Activated CD4-positive, alpha-beta memory T cell treated with anti-CD3 and anti-CD28 coated beads for 36 hours (primary cell): ENCODE measurements at regions of chr22 and their contacts with region 1.

Region 1: DNA sequence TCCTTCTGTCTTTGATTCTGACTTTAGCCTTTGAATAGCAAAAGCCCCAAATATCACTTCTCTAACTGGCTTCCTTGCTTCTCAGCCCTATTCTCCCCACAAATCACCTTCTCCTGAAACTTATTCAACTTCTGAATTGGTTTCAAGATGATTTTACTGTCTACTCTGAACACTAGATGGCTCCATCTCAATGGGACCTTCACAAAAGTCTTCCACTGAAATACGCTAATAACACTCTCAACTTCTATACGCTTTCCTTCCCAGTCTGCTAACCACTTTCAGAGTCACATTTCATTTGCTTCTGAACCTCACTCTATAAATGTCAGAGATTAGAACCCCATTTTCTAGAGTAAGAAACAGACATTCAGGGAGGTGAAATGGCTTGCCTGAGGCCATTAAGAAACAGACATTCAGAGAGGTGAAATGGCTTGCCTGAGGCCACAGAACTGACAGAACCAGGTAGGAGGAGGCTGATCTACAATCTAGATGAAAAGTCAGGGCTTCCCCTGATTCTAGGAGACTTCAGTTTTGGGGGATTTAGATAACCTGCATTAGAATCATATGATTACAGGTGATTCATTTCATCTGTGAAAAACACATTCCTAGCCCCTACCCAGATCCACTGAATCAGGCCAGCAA is 20.6 kb downstream of the MORC2 start:
- DNase-seq: no peak
- H3K4me3 Mint-ChIP-seq: no peak overlapping the region
- H3K27ac Mint-ChIP-seq: no peak overlapping the region
- H3K4me1 Mint-ChIP-seq: peaks cover 33% of the 10 kb centered on the region
- H3K27me3 Mint-ChIP-seq: no peaks in the 10 kb centered on the region

Region 2: GRCh38 chr22:30841264-30841663 is 106.7 kb before region 1 on chr22:
- CTCF ChIA-PET with region 1: no interaction called
- POLR2A ChIA-PET with region 1: no interaction called
- intact Hi-C with region 1: no loop called
- DNase-seq: no peak
- H3K4me3 Mint-ChIP-seq: no peak overlapping the region
- H3K27ac Mint-ChIP-seq: peak overlapping the region; percentile 30
- H3K4me1 Mint-ChIP-seq: no peaks in the 10 kb centered on the region
- H3K27me3 Mint-ChIP-seq: peaks cover 3% of the 10 kb centered on the region

Region 3: GRCh38 chr22:30998329-30998728 is 50.4 kb after region 1 on chr22:
- CTCF ChIA-PET with region 1: no interaction called
- POLR2A ChIA-PET with region 1: no interaction called
- intact Hi-C with region 1: no loop called
- DNase-seq: no peak
- H3K4me3 Mint-ChIP-seq: no peak overlapping the region
- H3K27ac Mint-ChIP-seq: no peak overlapping the region
- H3K4me1 Mint-ChIP-seq: no peaks in the 10 kb centered on the region
- H3K27me3 Mint-ChIP-seq: peaks cover 5% of the 10 kb centered on the region

Region 4: GRCh38 chr22:31020334-31020733 is 72.4 kb after region 1 on chr22:
- CTCF ChIA-PET with region 1: no interaction called
- POLR2A ChIA-PET with region 1: no interaction called
- intact Hi-C with region 1: no loop called
- DNase-seq: no peak
- H3K4me3 Mint-ChIP-seq: no peak overlapping the region
- H3K27ac Mint-ChIP-seq: no peak overlapping the region
- H3K4me1 Mint-ChIP-seq: no peaks in the 10 kb centered on the region
- H3K27me3 Mint-ChIP-seq: peaks cover 1% of the 10 kb centered on the region

Region 5: DNA sequence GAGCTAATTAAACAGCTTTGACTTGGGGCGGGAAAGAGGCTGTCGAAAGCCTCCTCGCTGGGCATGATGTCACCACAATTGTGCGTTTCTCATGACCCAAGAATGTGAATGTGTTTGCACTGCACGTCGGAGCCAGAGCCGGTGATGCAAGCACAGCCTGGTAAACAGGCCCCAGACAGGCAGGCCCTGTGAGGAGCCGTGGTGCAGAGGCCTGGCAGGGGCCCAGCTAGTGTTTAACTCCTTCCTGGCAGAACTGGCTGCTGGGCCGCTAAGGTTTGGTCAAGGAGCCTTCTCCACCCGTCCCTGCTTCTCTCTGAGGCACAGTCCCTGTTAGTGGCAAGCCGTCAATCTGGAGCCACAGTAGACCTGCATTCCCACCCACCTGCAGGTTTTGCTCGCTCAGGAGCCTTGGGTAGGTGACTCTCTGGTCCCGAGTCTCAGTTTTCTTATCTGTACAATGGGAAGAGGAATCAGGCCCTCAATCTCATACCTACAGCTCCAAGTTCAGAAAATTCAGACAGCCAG is 107.8 kb after region 1 on chr22:
- CTCF ChIA-PET with region 1: no interaction called
- POLR2A ChIA-PET with region 1: no interaction called
- intact Hi-C with region 1: no loop called
- DNase-seq: no peak
- H3K4me3 Mint-ChIP-seq: no peak overlapping the region
- H3K27ac Mint-ChIP-seq: no peak overlapping the region
- H3K4me1 Mint-ChIP-seq: no peaks in the 10 kb centered on the region
- H3K27me3 Mint-ChIP-seq: no peaks in the 10 kb centered on the region

Region 6: DNA sequence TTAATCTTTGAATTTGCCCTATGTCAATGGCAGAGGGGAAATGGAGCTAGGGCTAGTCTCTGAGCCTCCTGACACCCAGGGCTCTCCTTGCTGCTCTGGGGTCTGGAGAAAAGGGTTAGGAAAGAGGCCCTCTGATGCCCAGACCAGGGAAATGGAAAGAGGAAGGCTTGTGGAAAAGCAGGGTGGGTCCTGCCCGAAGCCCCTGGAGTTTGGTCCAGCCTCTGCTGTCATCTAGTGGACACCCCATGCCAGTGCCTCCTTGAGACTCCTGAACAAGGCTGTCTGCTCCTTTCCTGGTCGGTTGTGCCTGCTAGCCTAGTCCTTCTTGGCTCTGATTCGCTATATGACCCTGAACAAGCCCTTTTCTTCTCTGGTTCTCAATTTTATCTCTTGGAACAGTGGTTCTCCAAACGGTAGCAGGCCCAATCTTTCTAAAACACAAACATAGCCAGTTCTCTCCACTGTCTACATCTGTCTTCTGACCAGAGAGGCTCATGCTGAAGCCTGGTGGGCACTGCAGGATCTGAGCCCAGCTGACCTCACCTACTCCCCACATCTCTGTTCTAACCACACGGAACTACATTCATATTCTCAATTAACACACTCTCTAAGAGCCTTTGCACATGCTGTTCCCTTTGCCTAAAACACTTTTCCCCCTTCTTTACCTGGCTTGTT is 201.2 kb after region 1 on chr22:
- CTCF ChIA-PET with region 1: interaction called, 4 read pairs
- POLR2A ChIA-PET with region 1: no interaction called
- intact Hi-C with region 1: loop called (anchors 10 kb)
- DNase-seq: peak; percentile 53
- H3K4me3 Mint-ChIP-seq: no peak overlapping the region
- H3K27ac Mint-ChIP-seq: no peak overlapping the region
- H3K4me1 Mint-ChIP-seq: no peaks in the 10 kb centered on the region
- H3K27me3 Mint-ChIP-seq: peaks cover 2% of the 10 kb centered on the region

Region 7: DNA sequence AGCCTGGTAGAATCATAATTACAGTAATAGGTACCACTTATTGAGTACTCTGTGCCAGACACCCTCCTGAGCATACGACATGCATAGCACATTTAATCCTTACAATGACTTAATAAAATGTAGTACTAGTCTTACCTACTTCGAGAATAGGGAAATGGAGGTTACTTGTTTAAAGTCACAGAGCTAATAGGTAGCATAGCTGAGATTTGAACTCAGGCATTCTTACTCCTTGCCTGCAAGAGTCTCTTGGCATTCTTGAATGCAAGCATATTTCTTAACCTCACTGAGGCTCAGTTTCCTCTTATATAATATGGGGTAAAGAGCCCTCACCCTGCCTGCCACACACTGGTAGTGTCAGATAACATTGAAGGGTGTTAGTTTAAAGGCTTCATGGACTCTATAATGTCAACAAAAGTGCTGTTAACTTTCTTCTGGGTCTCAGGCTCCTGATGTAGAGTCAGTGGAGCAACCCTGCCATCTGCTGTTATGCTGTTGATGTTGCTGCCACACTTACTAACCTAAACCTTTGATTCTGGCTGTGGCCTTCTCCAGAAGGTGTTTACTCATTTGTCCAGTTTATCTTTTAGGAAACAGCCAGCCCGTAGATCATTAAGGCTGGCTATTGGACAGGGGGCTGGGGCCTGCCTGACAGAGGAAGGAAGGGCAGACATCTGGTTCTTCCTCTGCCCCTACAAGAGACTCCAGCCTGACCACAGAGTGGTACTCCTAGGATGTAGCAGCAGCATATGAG is 283.1 kb after region 1 on chr22:
- CTCF ChIA-PET with region 1: interaction called, 4 read pairs
- POLR2A ChIA-PET with region 1: no interaction called
- intact Hi-C with region 1: loop called (anchors 10 kb)
- DNase-seq: peak; percentile 48
- H3K4me3 Mint-ChIP-seq: no peak overlapping the region
- H3K27ac Mint-ChIP-seq: peak overlapping the region; percentile 0
- H3K4me1 Mint-ChIP-seq: peaks cover 38% of the 10 kb centered on the region
- H3K27me3 Mint-ChIP-seq: no peaks in the 10 kb centered on the region